Right cardiac atrium (tissue), 5 donors: ENCODE measurements at regions of chr4 and their contacts with region 1.

Region 1: GRCh38 chr4:74311696-74312313 is 3.5 kb downstream of the EPGN start:
- DNase-seq: no peak
- ATAC-seq: peak in 1 of 2 donors; percentile 47
- H3K4me3 ChIP-seq: no peak overlapping the region
- H3K27ac ChIP-seq: no peak overlapping the region
- H3K4me1 ChIP-seq: no peaks in the 10 kb centered on the region
- H3K27me3 ChIP-seq: no peaks in the 10 kb centered on the region

Region 2: GRCh38 chr4:74189331-74190043 is 122.3 kb before region 1 on chr4:
- intact Hi-C with region 1: loop called in 3 of 4 experiments (anchors 5 to 10 kb)
- DNase-seq: no peak
- ATAC-seq: no peak
- H3K4me3 ChIP-seq: no peak overlapping the region
- H3K27ac ChIP-seq: no peak overlapping the region
- H3K4me1 ChIP-seq: no peaks in the 10 kb centered on the region
- H3K27me3 ChIP-seq: no peaks in the 10 kb centered on the region

Region 3: GRCh38 chr4:74228691-74229640 is 82.8 kb before region 1 on chr4:
- intact Hi-C with region 1: loop called in 1 of 4 experiments (anchors 5 kb)
- DNase-seq: peak; percentile 72 to 80 (median 73)
- ATAC-seq: peak in 1 of 2 donors; percentile 74
- H3K4me3 ChIP-seq: no peak overlapping the region
- H3K27ac ChIP-seq: no peak overlapping the region
- H3K4me1 ChIP-seq: no peaks in the 10 kb centered on the region
- H3K27me3 ChIP-seq: no peaks in the 10 kb centered on the region